Naive thymus-derived CD4-positive, alpha-beta T cell (primary cell): ENCODE measurements at regions of chr7 and their contacts with region 1.

Region 1: DNA sequence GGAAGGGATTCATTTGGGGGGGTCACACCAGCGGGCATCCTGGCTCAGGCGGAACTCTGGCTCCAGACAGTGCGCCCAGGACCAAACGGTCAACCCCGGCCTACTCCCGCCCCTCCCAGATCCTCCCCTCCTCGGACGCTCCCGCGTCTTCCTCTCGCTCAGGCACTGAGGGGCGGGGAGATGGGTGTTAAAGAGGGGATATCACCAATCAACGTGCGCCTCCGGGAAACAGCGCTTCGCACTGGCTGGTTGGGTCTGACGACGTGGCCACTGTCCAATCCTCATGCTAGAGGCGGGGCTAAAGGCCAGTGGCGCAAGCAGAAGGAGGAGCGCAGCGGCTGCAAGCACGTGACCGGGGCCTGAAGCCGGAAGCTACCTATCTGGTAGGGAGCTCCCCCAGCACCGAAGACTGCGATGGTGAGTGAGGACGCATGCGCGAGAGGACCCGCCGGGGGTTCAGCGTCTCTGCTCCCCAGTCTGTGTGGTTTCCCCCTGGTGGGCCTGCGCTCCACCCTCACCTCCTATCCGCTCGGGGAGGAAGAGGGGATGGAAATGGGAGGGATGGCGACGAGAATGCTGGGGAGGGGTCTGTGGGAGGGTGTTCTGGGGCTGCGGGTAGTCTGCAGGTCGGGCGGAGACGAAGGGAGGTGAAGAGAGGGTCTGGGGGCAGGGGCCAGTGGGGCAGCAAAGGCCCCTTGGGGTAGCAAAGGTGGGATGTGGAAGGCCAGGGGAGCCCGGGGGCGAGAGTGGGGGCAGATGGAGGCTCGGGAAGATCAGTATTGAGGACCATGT is at the start of gene LAMTOR4:
- DNase-seq: peak; percentile 84 to 99 (median 97)
- ATAC-seq: peak; percentile 98
- H3K4me3 ChIP-seq: peak within 1 kb of the TSS; percentile 97
- H3K4me3 Mint-ChIP-seq: peak within 1 kb of the TSS; percentile 87 to 100 (median 96)
- H3K27ac ChIP-seq: peak within 1 kb of the TSS; percentile 98
- H3K27ac Mint-ChIP-seq: peak within 1 kb of the TSS; percentile 95 to 99 (median 98)
- H3K4me1 ChIP-seq: peaks cover 15 to 19% of the 10 kb centered on the region in 2 donors
- H3K4me1 Mint-ChIP-seq: peaks cover 27 to 45% (median 38%) of the 10 kb centered on the region in 7 donors
- H3K27me3 ChIP-seq: no peaks in the 10 kb centered on the region
- H3K27me3 Mint-ChIP-seq: no peaks in the 10 kb centered on the region
- total RNA-seq, gene LAMTOR4: 132 to 200 (median 173) TPM

Region 2: DNA sequence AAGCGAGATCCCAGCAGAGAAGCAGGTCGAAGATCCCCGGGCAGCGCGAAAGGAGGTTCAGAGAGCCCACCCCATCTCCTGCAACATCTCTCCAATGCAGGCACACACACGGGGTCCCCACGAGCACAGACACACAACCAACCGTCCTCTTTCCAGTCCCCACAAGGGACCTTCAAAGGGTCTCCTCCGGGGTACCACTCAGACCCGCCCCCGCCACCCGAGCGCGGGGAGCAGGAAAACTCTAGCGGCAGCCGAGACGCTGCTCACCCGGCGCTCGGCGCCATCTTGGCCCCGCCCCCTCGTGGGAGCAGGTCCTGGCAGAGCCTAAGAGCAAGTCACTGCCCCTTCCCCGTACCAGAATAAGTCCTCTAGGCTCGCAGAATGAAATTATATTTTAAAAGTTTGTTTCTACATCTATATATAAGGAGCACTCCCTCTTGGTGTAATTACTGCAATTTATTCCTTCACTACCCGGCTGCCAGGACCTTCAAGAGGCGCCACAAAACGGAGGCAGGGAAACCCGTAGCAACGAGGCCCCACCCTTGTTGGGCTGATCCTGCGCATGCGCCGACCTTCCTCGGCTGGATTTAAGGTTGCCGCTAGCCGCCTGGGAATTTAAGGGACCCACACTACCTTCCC is 29.6 kb before region 1 on chr7 and contains the starts of genes CNPY4 and TAF6:
- CTCF ChIA-PET with region 1: no interaction called
- POLR2A ChIA-PET with region 1: interaction called, 6 read pairs
- intact Hi-C with region 1: loop called in 1 of 2 experiments (anchors 1 kb)
- DNase-seq: peak; percentile 88 to 97 (median 95)
- ATAC-seq: peak; percentile 88
- H3K4me3 ChIP-seq: peak within 1 kb of the TSS; percentile 100
- H3K4me3 Mint-ChIP-seq: peak within 1 kb of the TSS; percentile 90 to 100 (median 98)
- H3K27ac ChIP-seq: peak within 1 kb of the TSS; percentile 88
- H3K27ac Mint-ChIP-seq: peak within 1 kb of the TSS; percentile 97 to 99 (median 98)
- H3K4me1 ChIP-seq: peaks cover 12 to 19% of the 10 kb centered on the region in 2 donors
- H3K4me1 Mint-ChIP-seq: peaks cover 18 to 34% (median 28%) of the 10 kb centered on the region in 7 donors
- H3K27me3 ChIP-seq: no peaks in the 10 kb centered on the region
- H3K27me3 Mint-ChIP-seq: no peaks in the 10 kb centered on the region
- total RNA-seq, gene CNPY4: 22.1 to 68.2 (median 40.3) TPM
- total RNA-seq, gene TAF6: 39.5 to 68.1 (median 55.0) TPM

Region 3: DNA sequence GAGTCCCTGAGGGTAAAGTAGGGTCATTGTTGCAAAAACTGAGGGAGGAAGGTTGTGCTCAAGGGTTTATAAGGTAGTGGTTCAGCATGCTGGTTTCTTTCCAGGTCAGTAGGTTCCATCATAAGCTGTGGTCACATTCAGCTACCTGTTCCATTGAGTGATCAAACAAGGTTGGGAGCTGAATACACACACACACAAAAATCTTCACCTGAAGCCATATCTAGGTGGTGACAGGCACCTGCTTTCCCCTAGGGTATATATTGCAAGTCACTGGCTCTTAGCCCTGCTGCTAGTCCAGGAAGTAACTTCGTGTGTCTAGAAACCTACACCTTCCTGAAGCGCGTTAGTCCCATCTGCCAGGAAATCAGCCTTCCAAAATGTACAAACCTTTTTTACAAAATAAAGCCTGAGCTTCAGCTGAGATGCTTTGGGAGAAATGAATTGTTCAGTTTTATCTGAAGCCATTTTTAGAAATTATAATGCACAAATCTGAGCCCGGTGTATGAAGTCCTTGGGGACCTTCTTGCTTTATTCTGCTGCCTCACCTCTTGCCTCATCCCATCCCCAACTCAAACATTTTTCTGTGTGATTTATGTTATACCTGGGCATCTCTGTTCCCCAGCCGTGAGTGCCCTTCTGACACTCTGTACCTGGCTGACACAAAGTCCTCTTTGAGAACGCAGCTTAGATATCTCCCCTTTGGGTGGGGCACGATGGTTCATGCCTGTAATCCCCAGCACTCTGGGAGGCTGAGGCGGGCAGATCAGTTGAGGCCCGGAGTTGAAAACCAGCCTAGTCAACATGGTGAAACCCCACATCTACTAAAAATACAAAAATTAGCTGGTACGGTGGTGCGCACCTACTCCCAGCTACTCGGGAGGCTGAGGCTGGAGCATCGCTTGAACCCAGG is 10.6 kb before region 1 on chr7:
- CTCF ChIA-PET with region 1: interaction called, 26 read pairs
- POLR2A ChIA-PET with region 1: interaction called, 16 read pairs
- intact Hi-C with region 1: loop called in 1 of 2 experiments (anchors 1 kb)
- DNase-seq: peak in 3 of 9 donors; percentile 31 to 41 (median 35)
- ATAC-seq: peak; percentile 42
- H3K4me3 ChIP-seq: peak overlapping the region; percentile 9
- H3K4me3 Mint-ChIP-seq: peak overlapping the region in 7 of 10 donors; percentile 1 to 69 (median 54)
- H3K27ac ChIP-seq: peak overlapping the region; percentile 28
- H3K27ac Mint-ChIP-seq: peak overlapping the region in 8 of 9 donors; percentile 57 to 90 (median 70)
- H3K4me1 ChIP-seq: peaks cover 0 to 11% of the 10 kb centered on the region in 2 donors
- H3K4me1 Mint-ChIP-seq: peaks cover 0 to 16% (median 13%) of the 10 kb centered on the region in 7 donors
- H3K27me3 ChIP-seq: no peaks in the 10 kb centered on the region
- H3K27me3 Mint-ChIP-seq: no peaks in the 10 kb centered on the region

Region 4: DNA sequence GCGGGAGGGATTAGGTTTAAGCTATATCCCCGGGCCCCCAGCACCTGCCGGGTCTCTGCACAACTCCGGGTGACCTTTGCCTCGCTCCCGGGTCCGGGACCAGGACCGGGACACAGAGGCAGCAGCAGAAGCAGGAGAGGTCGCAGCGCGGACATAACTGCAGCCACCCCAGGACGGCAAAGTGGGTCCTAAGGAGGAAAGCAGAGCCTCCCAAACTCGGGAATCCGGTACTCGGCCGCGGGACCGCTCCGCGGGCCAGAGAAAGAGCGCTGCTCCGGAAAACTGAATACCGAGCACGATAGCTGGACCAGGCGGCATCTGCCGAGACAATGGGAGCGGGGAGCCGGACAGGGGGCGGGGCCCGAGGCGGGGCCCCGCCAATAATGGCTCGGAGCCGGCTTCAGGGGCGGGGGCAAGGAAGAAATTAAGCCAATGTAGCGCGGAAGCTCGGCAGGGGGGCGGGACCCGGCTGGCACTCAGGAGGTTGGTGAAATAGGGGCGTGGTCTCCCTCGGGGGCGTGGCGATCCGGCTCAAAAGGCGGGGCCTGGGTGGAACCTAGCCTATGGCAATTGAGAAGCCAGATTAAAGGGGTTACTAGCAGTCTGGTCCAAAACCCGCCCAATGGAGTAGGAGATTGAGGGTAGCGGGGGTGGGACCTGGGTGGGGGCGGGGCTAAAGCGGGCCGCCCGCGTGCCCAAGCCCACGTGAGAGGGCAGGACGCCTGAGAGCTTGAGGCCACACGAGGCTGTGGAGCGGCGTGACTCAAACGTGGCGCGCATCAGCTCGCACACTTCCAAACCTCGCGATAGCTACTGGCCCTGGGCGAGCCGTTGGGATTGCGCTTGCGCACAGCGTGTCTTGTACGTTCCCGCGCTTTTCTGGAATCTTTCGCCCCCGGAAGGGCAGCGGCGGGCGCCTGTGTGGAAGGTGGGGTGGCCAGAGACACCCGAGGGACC is 28.6 kb after region 1 on chr7 and contains the starts of genes GPC2 and STAG3:
- CTCF ChIA-PET with region 1: interaction called, 3 read pairs
- POLR2A ChIA-PET with region 1: interaction called, 383 read pairs
- intact Hi-C with region 1: loop called (anchors 1 kb)
- DNase-seq: peak; percentile 95 to 99 (median 98)
- ATAC-seq: peak; percentile 97
- H3K4me3 ChIP-seq: peak within 1 kb of the TSS; percentile 70
- H3K4me3 Mint-ChIP-seq: peak within 1 kb of the TSS; percentile 76 to 84 (median 80)
- H3K27ac ChIP-seq: peak within 1 kb of the TSS; percentile 76
- H3K27ac Mint-ChIP-seq: peak within 1 kb of the TSS; percentile 42 to 92 (median 78)
- H3K4me1 ChIP-seq: peaks cover 7 to 28% of the 10 kb centered on the region in 2 donors
- H3K4me1 Mint-ChIP-seq: peaks cover 28 to 67% (median 52%) of the 10 kb centered on the region in 7 donors
- H3K27me3 ChIP-seq: no peaks in the 10 kb centered on the region
- H3K27me3 Mint-ChIP-seq: peaks cover 0 to 4% (median 0%) of the 10 kb centered on the region in 5 donors
- total RNA-seq, gene GPC2: 8.1 to 30.6 (median 18.2) TPM
- total RNA-seq, gene STAG3: 5.5 to 24.6 (median 9.5) TPM

Region 5: GRCh38 chr7:100271716-100272537 is 123.2 kb after region 1 on chr7:
- CTCF ChIA-PET with region 1: no interaction called
- POLR2A ChIA-PET with region 1: no interaction called
- intact Hi-C with region 1: loop called in 1 of 2 experiments (anchors 5 kb)
- DNase-seq: peak; percentile 97 to 99 (median 98)
- ATAC-seq: peak; percentile 96
- H3K4me3 ChIP-seq: peak overlapping the region; percentile 61
- H3K4me3 Mint-ChIP-seq: peak overlapping the region; percentile 78 to 89 (median 82)
- H3K27ac ChIP-seq: peak overlapping the region; percentile 61
- H3K27ac Mint-ChIP-seq: peak overlapping the region in 4 of 9 donors; percentile 21 to 84 (median 46)
- H3K4me1 ChIP-seq: peaks cover 0 to 4% of the 10 kb centered on the region in 2 donors
- H3K4me1 Mint-ChIP-seq: peaks cover 8 to 19% (median 17%) of the 10 kb centered on the region in 7 donors
- H3K27me3 ChIP-seq: no peaks in the 10 kb centered on the region
- H3K27me3 Mint-ChIP-seq: peaks cover 0 to 4% (median 0%) of the 10 kb centered on the region in 5 donors